ENCODE measurements at regions of chr14 and their contacts with region 1.

Region 1: DNA sequence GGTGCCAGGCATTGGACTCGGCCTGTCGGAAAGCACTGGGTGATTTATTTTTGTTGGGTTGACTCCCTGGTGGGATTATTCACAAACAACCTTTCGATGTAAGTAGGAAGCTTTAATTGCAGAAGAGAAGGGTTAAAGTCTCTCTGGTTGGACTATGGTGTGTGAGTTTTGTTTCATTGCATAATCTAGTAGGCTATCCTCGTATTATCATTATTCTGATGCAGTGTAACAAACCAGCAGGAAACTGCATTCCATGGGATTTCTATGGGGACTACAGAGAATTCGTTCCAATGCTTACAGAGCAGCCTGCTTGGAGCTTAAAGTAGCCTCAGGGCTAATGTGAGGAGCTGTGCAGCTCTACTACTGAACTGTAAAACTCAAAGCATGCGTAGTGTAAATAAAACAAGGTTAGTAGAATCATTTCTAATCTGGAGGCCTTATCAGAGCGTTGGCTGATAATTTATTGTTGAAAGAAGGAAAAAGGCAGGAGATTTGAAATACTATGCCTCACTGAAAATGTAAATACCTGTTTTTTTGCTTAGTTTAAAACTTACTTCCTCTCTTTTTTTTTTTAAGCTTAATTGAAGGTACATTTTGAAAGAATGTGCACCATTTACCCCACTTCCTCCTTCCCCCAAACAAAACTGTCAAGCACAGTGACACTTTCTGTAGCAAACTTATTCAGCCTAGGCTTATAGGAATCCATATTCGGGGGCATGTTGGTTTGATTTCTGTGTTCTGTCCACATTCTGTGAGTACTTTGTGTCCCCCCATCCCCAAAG is 226.7 kb downstream of the NPAS3 start:
- DNase-seq: peak; percentile 71 to 79
- H3K4me3 ChIP-seq: no peak overlapping the region
- H3K4me3 Mint-ChIP-seq: no peak overlapping the region
- H3K27ac Mint-ChIP-seq: no peak overlapping the region
- H3K4me1 ChIP-seq: peaks cover 13% of the 10 kb centered on the region
- H3K4me1 Mint-ChIP-seq: no peaks in the 10 kb centered on the region
- H3K27me3 ChIP-seq: no peaks in the 10 kb centered on the region
- H3K27me3 Mint-ChIP-seq: peaks cover 2% of the 10 kb centered on the region
- CTCF ChIP-seq: no peak

Region 2: DNA sequence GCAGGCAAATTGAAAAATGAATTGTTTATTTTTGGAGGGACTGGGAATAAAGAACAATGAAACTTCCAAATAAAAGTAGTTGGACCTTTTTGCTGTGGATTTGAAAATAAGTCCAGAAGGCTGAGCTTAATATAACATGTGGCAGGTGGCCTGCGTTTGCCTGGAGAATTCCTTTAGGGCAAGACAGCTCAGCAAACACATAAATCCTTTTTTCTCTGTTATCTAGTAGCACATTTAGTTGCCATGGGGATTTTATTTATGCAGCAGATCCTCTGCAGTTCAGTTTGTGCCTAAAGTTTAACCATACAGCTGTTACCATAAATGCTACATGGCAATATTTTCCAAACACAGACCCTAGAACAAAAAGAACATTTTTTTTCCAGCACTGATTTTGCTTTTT is 46.7 kb before region 1 on chr14:
- CTCF ChIA-PET with region 1: no interaction called
- POLR2A ChIA-PET with region 1: no interaction called
- intact Hi-C with region 1: loop called (anchors 1 kb)
- DNase-seq: peak in 1 of 2 experiments; percentile 32
- H3K4me3 ChIP-seq: no peak overlapping the region
- H3K4me3 Mint-ChIP-seq: no peak overlapping the region
- H3K27ac Mint-ChIP-seq: no peak overlapping the region
- H3K4me1 ChIP-seq: no peaks in the 10 kb centered on the region
- H3K4me1 Mint-ChIP-seq: no peaks in the 10 kb centered on the region
- H3K27me3 ChIP-seq: no peaks in the 10 kb centered on the region; the same call in 1 of the 2 replicates
- H3K27me3 Mint-ChIP-seq: peaks cover 8% of the 10 kb centered on the region
- CTCF ChIP-seq: no peak

Region 3: GRCh38 chr14:33150666-33151428 is 14.5 kb before region 1 on chr14:
- CTCF ChIA-PET with region 1: no interaction called
- POLR2A ChIA-PET with region 1: no interaction called
- intact Hi-C with region 1: loop called (anchors 1 kb)
- DNase-seq: no peak
- H3K4me3 ChIP-seq: no peak overlapping the region
- H3K4me3 Mint-ChIP-seq: no peak overlapping the region
- H3K27ac Mint-ChIP-seq: no peak overlapping the region
- H3K4me1 ChIP-seq: peaks cover 4% of the 10 kb centered on the region; the same call in 1 of the 2 replicates
- H3K4me1 Mint-ChIP-seq: no peaks in the 10 kb centered on the region
- H3K27me3 ChIP-seq: no peaks in the 10 kb centered on the region
- H3K27me3 Mint-ChIP-seq: no peaks in the 10 kb centered on the region
- CTCF ChIP-seq: no peak

Measured in Caco-2 (cell line).